GM12878 (cell line): ENCODE measurements at regions of chr6 and their contacts with region 1.

Region 1: GRCh38 chr6:149484733-149485700 is at the start of gene ZC3H12D:
- DNase-seq: no peak
- ATAC-seq: peak; percentile 65
- H3K4me3 ChIP-seq: peak within 1 kb of the TSS; percentile 71
- H3K27ac ChIP-seq: peak within 1 kb of the TSS; percentile 95
- H3K4me1 ChIP-seq: peaks cover 41% of the 10 kb centered on the region
- H3K27me3 ChIP-seq: no peaks in the 10 kb centered on the region
- CTCF ChIP-seq: peak; percentile 55 to 61 (median 56)
- EP300 ChIP-seq: peak; percentile 37 to 74; a peak in 3 of 4 replicates
- POLR2A ChIP-seq: peak; percentile 70
- RAD21 ChIP-seq: peak; percentile 45
- polyA plus RNA-seq, gene ZC3H12D: 1.4 to 2.0 TPM

Region 2: DNA sequence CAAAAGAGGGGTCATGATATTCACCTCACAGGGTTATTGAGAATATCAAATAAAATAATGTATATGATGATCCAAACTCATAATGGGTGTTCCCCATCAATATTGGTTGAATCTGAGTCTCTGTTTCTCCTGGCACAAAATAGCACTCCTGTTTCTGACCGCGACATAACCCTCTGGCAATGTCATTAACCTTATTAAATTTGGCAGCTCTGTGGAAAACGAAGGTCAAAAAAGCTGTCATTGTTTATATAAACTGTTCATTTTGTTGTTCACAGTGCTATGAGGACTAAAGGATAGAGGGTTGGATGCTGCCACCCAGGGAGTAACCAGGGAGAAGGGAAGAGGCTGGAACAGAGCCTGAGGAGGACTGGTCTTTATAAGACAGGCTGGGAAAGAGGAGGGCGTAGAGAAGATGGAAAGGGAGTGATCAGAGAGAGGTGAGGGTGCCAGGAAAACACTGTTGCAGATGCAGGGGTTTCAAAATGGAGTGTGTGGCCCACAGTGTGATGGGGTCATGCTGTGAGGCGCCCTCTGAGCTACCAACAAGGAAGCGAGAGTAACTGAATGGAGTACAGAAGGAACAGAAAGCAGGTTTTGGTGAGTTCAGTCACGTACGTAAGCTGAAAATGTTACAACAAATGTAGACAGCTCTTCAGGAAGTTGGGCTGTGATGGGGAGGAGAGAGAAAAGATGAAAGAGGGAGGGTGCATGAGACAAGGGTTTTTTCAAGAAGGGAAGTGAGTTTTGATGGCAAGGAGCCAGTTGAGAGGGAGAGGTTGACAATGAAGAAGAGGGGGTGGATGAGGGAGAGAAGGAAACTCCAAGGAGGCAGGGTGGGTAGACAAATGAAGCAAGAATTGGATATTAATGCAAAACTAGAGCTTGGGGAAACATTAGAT is 419.1 kb before region 1 on chr6:
- CTCF ChIA-PET with region 1: interaction called, 6 read pairs
- POLR2A ChIA-PET with region 1: interaction called, 3 read pairs
- RAD21 ChIA-PET with region 1: interaction called, 8 read pairs
- SMC1A ChIA-PET with region 1: interaction called, 10 read pairs
- in situ Hi-C with region 1: no loop called
- intact Hi-C with region 1: no loop called
- DNase-seq: peak; percentile 99
- ATAC-seq: peak; percentile 95
- H3K4me3 ChIP-seq: no peak overlapping the region; the same call in 1 of the 2 replicates
- H3K27ac ChIP-seq: peak overlapping the region; percentile 95
- H3K4me1 ChIP-seq: peaks cover 42% of the 10 kb centered on the region
- H3K27me3 ChIP-seq: no peaks in the 10 kb centered on the region
- CTCF ChIP-seq: no peak
- EP300 ChIP-seq: peak; percentile 91 to 97; a peak in 3 of 4 replicates
- POLR2A ChIP-seq: peak; percentile 76
- RAD21 ChIP-seq: no peak; the same call in 1 of the 2 replicates

Region 3: DNA sequence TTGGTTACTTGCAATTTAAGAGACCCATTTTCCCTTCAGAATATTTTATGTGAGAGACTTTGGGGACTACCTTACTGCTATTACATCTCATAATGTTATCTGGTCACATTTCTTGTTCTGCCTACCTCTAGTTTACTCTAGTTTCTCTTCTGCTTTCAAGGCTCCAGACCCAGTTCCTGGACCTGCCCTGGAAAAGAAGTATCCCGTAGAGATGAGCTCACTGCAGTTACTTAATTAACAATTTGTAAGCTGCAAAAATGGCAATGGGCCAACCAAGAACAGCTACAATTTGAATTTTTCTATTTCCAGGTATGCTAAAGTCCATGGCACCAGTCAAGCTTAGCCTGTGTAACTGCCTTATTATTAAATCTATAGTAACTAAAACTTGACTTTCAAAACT is 142.5 kb before region 1 on chr6:
- CTCF ChIA-PET with region 1: no interaction called
- POLR2A ChIA-PET with region 1: no interaction called
- RAD21 ChIA-PET with region 1: no interaction called
- SMC1A ChIA-PET with region 1: no interaction called
- in situ Hi-C with region 1: no loop called
- intact Hi-C with region 1: no loop called
- DNase-seq: no peak
- ATAC-seq: peak; percentile 83
- H3K4me3 ChIP-seq: no peak overlapping the region; the same call in 1 of the 2 replicates
- H3K27ac ChIP-seq: peak overlapping the region; percentile 49
- H3K4me1 ChIP-seq: peaks cover 28% of the 10 kb centered on the region; the same call in 1 of the 2 replicates
- H3K27me3 ChIP-seq: no peaks in the 10 kb centered on the region
- CTCF ChIP-seq: no peak
- EP300 ChIP-seq: no peak
- POLR2A ChIP-seq: no peak
- RAD21 ChIP-seq: no peak

Region 4: GRCh38 chr6:149468179-149468578 is 16.8 kb before region 1 on chr6:
- CTCF ChIA-PET with region 1: interaction called, 11 read pairs
- POLR2A ChIA-PET with region 1: interaction called, 6 read pairs
- RAD21 ChIA-PET with region 1: no interaction called
- SMC1A ChIA-PET with region 1: interaction called, 12 read pairs
- in situ Hi-C with region 1: no loop called
- intact Hi-C with region 1: no loop called
- DNase-seq: no peak
- ATAC-seq: peak; percentile 43
- H3K4me3 ChIP-seq: peak overlapping the region; percentile 60
- H3K27ac ChIP-seq: peak overlapping the region; percentile 85
- H3K4me1 ChIP-seq: peaks cover 85% of the 10 kb centered on the region
- H3K27me3 ChIP-seq: no peaks in the 10 kb centered on the region
- CTCF ChIP-seq: no peak
- EP300 ChIP-seq: no peak
- POLR2A ChIP-seq: no peak
- RAD21 ChIP-seq: no peak

Region 5: DNA sequence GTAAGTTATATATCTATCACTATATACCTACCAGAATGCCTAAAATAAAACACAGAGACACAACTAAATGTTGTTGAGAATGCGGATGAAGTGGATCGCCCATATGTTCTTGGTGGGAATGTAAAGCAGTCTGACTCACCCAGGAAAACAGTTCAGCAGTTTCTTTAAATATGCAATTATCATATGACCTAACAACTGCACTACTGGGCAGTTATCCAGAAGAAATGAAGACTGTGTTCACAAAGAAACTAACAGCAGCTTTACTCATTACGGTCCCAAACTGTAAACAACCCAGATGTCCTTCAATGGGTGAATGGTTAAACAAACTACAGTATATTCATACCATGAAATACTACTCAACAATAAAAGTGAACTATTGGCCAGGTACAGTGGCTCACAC is 14.0 kb after region 1 on chr6:
- CTCF ChIA-PET with region 1: interaction called, 11 read pairs
- POLR2A ChIA-PET with region 1: interaction called, 4 read pairs
- RAD21 ChIA-PET with region 1: interaction called, 13 read pairs
- SMC1A ChIA-PET with region 1: interaction called, 5 read pairs
- in situ Hi-C with region 1: no loop called
- intact Hi-C with region 1: no loop called
- DNase-seq: no peak
- ATAC-seq: no peak
- H3K4me3 ChIP-seq: no peak overlapping the region
- H3K27ac ChIP-seq: no peak overlapping the region
- H3K4me1 ChIP-seq: peaks cover 31% of the 10 kb centered on the region
- H3K27me3 ChIP-seq: no peaks in the 10 kb centered on the region
- CTCF ChIP-seq: no peak
- EP300 ChIP-seq: no peak
- POLR2A ChIP-seq: no peak
- RAD21 ChIP-seq: no peak

Region 6: GRCh38 chr6:149508485-149508884 is 23.5 kb after region 1 on chr6:
- CTCF ChIA-PET with region 1: interaction called, 19 read pairs
- POLR2A ChIA-PET with region 1: interaction called, 5 read pairs
- RAD21 ChIA-PET with region 1: interaction called, 16 read pairs
- SMC1A ChIA-PET with region 1: interaction called, 6 read pairs
- in situ Hi-C with region 1: no loop called
- intact Hi-C with region 1: no loop called
- DNase-seq: no peak
- ATAC-seq: no peak
- H3K4me3 ChIP-seq: no peak overlapping the region
- H3K27ac ChIP-seq: peak overlapping the region; percentile 28; the same call in 1 of the 2 replicates
- H3K4me1 ChIP-seq: no peaks in the 10 kb centered on the region
- H3K27me3 ChIP-seq: no peaks in the 10 kb centered on the region
- CTCF ChIP-seq: no peak
- EP300 ChIP-seq: no peak
- POLR2A ChIP-seq: no peak
- RAD21 ChIP-seq: no peak

Region 7: GRCh38 chr6:149545754-149546528 is 60.9 kb after region 1 on chr6 and contains the start of gene PPIL4:
- CTCF ChIA-PET with region 1: interaction called, 6 read pairs
- POLR2A ChIA-PET with region 1: no interaction called
- RAD21 ChIA-PET with region 1: interaction called, 10 read pairs
- SMC1A ChIA-PET with region 1: interaction called, 8 read pairs
- in situ Hi-C with region 1: no loop called
- intact Hi-C with region 1: no loop called
- DNase-seq: peak; percentile 71
- ATAC-seq: peak; percentile 92
- H3K4me3 ChIP-seq: peak within 1 kb of the TSS; percentile 92
- H3K27ac ChIP-seq: peak within 1 kb of the TSS; percentile 87
- H3K4me1 ChIP-seq: no peaks in the 10 kb centered on the region; the same call in 1 of the 2 replicates
- H3K27me3 ChIP-seq: no peaks in the 10 kb centered on the region; a peak in 1 of 4 replicates
- CTCF ChIP-seq: peak; percentile 74 to 89 (median 75)
- EP300 ChIP-seq: 0 out of 4 replicates have a peak, but pooled peaks of 1 of the 2 experiments have one; percentile 21
- POLR2A ChIP-seq: peak; percentile 94
- RAD21 ChIP-seq: peak; percentile 59
- polyA plus RNA-seq, gene PPIL4: 24.7 to 25.9 TPM